CD4-positive, alpha-beta memory T cell (primary cell): ENCODE measurements at regions of chr2 and their contacts with region 1.

Region 1: DNA sequence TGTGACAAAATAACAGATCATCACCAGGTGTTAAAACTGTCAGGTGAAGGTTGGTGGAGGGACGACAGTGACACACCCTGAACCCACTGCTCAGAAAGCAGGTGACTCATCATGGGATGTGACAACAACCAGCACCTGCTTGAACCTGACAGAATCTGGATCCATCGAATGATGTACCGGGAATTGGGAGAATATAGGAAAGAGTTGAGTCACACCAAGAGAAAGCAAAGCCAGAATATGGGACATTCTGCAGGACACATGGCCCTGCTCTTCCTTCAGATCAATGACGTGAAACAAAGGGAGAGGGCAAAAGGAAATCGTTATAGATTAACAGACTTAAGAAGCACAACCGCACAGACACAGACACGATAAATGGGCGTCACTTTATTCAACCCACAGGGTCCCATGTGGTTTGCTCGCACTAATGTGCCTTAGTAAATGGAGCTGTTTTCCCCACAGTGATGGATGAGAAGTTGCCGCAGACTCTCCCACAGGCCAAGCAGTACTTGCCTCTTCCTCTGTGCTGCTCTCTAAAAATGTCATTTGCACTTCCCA is 100.1 kb downstream of the CRACDL start:
- DNase-seq: peak; percentile 66 to 88 (median 79)
- H3K4me3 ChIP-seq: peak overlapping the region in 1 of 2 donors; percentile 22
- H3K4me3 Mint-ChIP-seq: peak overlapping the region; percentile 43 to 77 (median 64)
- H3K27ac ChIP-seq: peak overlapping the region; percentile 54
- H3K27ac Mint-ChIP-seq: peak overlapping the region; percentile 88 to 99 (median 97)
- H3K4me1 ChIP-seq: peaks cover 40% of the 10 kb centered on the region
- H3K4me1 Mint-ChIP-seq: peaks cover 36 to 53% (median 44%) of the 10 kb centered on the region in 4 donors
- H3K27me3 ChIP-seq: no peaks in the 10 kb centered on the region
- H3K27me3 Mint-ChIP-seq: no peaks in the 10 kb centered on the region

Region 2: DNA sequence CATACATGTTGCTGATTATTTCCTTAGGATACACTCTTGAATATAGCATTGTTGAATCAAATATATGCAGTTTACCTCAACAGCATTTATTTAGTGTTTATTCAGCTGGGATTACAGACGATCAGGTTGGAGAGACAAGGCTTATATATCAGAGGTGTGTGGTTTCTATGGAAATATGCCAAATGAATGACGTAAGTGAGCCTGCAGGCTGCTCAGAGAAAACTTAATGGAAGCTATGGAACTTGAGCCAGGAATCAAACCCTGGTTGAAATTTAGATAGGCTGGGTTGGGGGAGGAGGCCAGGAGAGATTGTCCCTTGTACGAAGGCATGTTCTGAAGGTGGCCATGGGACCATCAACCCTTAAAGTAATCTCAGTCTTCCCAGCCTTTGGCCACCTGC is 311.7 kb before region 1 on chr2:
- CTCF ChIA-PET with region 1: no interaction called
- POLR2A ChIA-PET with region 1: no interaction called
- intact Hi-C with region 1: no loop called
- DNase-seq: no peak
- H3K4me3 ChIP-seq: no peak overlapping the region
- H3K4me3 Mint-ChIP-seq: no peak overlapping the region
- H3K27ac ChIP-seq: no peak overlapping the region
- H3K27ac Mint-ChIP-seq: peak overlapping the region in 1 of 7 donors; percentile 18
- H3K4me1 ChIP-seq: no peaks in the 10 kb centered on the region
- H3K4me1 Mint-ChIP-seq: peaks cover 7 to 12% (median 11%) of the 10 kb centered on the region in 4 donors
- H3K27me3 ChIP-seq: no peaks in the 10 kb centered on the region
- H3K27me3 Mint-ChIP-seq: no peaks in the 10 kb centered on the region

Region 3: DNA sequence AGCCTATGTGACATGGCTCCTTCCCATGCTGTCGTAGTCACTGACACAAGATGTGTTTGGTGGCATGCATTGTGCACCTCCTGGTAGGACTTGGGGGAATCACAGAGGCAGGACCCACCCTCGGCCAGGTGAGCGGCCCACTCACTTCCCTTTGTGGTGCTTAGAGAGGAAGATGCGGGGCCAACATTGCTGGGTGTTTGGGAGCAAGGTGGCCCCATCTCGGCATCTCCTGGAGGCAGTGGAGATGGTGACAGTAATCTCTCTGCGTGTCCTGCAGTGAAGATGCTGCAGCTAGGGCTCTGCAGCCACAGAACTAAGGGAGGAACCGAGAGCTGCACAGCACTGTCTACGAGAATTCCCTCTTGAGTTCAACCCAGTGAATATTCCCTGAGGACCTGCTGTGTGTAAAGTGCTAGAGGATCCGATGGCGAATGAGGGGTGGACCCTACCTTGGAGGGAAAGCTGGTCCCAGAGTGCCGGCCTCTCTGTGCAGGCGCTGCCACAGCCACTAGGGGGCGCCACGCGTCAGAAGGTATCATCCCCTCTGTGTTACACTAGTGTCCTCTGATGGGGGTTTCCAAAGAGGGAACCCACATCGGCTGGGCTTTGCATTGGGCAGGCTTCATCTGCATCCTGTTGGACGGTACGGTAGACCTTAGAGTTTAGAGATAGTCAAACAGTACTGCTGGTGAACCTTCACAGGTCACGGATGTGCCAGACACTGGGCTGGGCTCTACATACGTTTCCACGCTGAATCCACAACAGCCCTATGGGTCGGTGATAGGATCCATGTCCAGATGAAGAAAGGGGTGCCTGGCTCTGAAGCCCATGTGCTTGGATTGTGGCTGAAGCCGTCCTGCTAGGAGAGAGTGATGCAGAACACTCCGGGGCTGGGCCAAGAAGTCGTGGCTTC is 266.8 kb before region 1 on chr2:
- CTCF ChIA-PET with region 1: interaction called, 6 read pairs
- POLR2A ChIA-PET with region 1: interaction called, 3 read pairs
- intact Hi-C with region 1: loop called (anchors 1 kb)
- DNase-seq: peak; percentile 47 to 60 (median 53)
- H3K4me3 ChIP-seq: no peak overlapping the region
- H3K4me3 Mint-ChIP-seq: peak overlapping the region in 1 of 8 donors; percentile 18
- H3K27ac ChIP-seq: peak overlapping the region; percentile 7
- H3K27ac Mint-ChIP-seq: peak overlapping the region; percentile 3 to 75 (median 37)
- H3K4me1 ChIP-seq: no peaks in the 10 kb centered on the region
- H3K4me1 Mint-ChIP-seq: peaks cover 0 to 9% (median 4%) of the 10 kb centered on the region in 4 donors
- H3K27me3 ChIP-seq: no peaks in the 10 kb centered on the region
- H3K27me3 Mint-ChIP-seq: no peaks in the 10 kb centered on the region

Region 4: DNA sequence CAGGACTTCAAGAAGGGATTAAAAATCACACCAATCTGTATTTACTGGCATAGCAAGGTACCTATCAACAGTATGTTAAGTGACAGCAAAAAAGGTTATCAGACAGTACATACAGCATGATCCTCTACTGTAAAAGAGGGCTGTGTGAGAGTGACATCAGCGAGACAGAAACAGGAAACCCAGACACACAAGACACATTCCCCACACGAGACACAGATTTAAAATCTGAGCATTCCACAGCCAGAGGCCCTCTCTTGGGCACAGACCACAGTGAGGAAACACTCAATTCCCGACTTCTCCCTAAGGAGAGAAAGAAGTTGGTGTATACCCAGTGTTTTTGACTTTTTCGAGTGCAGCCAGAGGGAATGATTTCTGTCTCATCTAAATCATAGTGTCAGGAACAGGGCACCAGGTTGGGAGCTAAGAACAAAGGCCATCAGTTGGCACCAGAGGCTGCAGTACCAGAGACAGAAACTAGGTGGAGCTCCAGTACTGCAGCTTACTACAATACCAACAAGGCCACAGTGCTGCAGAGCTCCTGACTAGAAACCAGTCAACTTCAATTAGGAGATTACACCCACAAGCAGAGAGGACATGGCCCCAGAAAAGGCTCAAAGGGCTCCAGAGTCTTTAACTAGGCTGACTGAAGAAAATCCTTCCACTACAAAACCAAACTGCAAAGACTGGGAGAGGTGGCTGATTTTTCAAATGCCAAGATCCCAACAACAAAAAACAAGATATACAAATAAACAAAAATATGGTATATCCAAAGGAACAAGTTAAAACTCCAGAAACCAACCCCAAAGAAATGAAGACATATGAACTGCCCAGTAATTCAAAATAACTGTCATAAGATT is 186.5 kb before region 1 on chr2:
- CTCF ChIA-PET with region 1: interaction called, 51 read pairs
- POLR2A ChIA-PET with region 1: interaction called, 13 read pairs
- intact Hi-C with region 1: loop called (anchors 1 kb)
- DNase-seq: peak; percentile 79 to 85 (median 81)
- H3K4me3 ChIP-seq: no peak overlapping the region
- H3K4me3 Mint-ChIP-seq: peak overlapping the region in 5 of 8 donors; percentile 10 to 73 (median 33)
- H3K27ac ChIP-seq: peak overlapping the region; percentile 10
- H3K27ac Mint-ChIP-seq: peak overlapping the region; percentile 66 to 89 (median 84)
- H3K4me1 ChIP-seq: peaks cover 52% of the 10 kb centered on the region
- H3K4me1 Mint-ChIP-seq: peaks cover 45 to 60% (median 54%) of the 10 kb centered on the region in 4 donors
- H3K27me3 ChIP-seq: no peaks in the 10 kb centered on the region
- H3K27me3 Mint-ChIP-seq: no peaks in the 10 kb centered on the region

Region 5: DNA sequence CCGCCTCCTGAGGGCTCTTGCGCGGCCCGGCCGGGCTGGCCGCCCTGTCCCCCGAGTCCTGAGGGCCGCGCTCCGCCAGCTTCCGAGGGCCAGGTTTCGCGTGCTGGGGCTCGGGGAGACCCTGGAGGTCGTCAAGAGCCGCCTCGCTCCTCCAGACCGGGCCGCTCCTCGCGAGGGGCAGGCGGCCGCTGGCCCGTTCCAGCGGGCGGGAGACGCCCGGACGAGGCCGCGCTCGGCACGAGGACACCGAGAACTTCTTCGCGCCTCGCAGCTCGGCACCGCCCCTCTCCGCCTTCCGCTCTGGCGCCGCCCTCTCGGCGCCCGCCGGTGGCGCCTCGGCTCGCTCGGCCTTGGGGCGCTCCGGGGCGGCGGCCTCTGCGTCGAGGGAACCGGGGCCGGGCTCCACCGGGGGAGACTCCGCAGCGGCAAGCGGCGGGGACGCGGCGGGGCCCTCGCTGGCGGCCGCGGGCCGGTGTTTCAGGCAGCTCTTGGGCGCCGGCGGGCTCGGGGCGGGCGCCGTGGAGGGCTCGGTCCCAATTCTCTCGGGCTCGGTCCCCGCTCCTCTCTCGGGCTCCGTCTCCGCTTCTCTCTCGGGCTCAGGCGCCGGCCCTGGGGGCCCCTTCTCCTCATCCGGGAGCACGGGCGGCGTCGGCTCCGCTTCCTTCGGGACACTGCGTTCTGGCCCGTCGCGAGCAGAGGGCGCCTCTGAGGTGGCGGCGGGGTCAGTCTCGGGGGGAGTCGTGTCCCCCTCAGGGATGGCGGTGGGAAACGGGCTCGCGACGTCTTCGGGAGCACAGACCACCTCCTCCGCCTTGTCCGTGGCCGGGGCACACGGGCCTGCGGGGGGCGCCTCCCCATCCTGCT is 13.4 kb before region 1 on chr2:
- CTCF ChIA-PET with region 1: interaction called, 22 read pairs
- POLR2A ChIA-PET with region 1: interaction called, 3 read pairs
- intact Hi-C with region 1: no loop called
- DNase-seq: peak; percentile 51 to 70 (median 64)
- H3K4me3 ChIP-seq: peak overlapping the region in 1 of 2 donors; percentile 43
- H3K4me3 Mint-ChIP-seq: peak overlapping the region in 5 of 8 donors; percentile 22 to 76 (median 54)
- H3K27ac ChIP-seq: peak overlapping the region; percentile 39
- H3K27ac Mint-ChIP-seq: no peak overlapping the region
- H3K4me1 ChIP-seq: peaks cover 20% of the 10 kb centered on the region
- H3K4me1 Mint-ChIP-seq: peaks cover 23 to 53% (median 36%) of the 10 kb centered on the region in 4 donors
- H3K27me3 ChIP-seq: no peaks in the 10 kb centered on the region
- H3K27me3 Mint-ChIP-seq: peaks cover 0 to 1% of the 10 kb centered on the region in 2 donors